Uterus (tissue), 4 donors: ENCODE measurements at regions of chr6 and their contacts with region 1.

Region 1: DNA sequence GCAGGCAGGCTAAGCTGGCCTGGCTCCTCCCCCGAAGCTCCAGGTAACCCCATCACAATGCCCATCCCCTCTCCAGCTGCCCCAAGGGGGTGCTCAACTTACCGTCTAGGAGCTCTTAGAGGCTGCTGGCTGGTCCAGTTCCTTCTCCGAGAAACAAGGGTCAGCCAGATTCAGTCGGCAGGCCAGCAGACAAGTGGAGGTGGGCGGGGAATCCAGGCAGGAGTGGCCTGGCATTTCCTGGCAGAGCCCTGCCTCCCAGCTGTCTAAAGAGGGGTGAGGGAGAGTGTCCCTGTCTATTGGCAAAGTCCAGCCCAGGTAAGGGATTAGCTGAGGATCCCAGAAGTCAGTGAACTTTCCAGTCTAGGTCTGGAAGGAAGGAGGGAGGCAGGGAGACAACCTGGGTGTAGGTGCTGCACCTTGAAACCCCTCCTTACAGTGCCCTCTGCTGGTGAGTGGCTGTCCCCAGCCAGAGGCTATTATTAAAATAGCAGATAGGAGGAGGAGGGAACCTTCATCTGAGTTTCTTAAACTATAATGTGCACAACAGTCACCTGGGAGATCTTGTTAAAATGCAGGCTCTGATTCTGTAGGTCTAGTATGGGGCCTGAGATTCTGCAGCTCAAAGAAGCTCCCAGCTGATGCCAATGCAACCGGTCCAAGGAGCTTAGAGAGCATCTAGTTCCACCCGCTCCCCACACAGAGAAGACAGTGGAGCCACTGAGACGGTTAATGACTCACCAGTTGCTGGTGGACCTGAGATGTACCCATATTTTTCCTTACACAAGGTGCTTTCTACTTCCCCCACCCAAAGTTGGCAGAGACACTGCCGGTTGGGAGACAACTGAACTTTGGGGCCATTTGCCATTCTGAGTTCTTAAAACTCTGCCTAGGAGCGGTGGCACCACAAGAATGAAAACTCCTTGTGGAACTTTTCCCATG is at the start of gene UNC5CL:
- DNase-seq: no peak
- H3K4me3 ChIP-seq: no peak within 1 kb of the TSS
- H3K27ac ChIP-seq: no peak within 1 kb of the TSS
- H3K4me1 ChIP-seq: no peaks in the 10 kb centered on the region
- H3K27me3 ChIP-seq: no peaks in the 10 kb centered on the region
- CTCF ChIP-seq: peak in 2 of 4 experiments; percentile 19 to 29
- POLR2A ChIP-seq: no peak
- total RNA-seq, gene UNC5CL: 0.26 to 1.4 (median 1.2) TPM in 3 of 4 donors, not detected in the other

Region 2: GRCh38 chr6:40894962-40895799 is 144.1 kb before region 1 on chr6:
- intact Hi-C with region 1: loop called (anchors 10 kb)
- DNase-seq: peak; percentile 21 to 43
- H3K4me3 ChIP-seq: no peak overlapping the region
- H3K27ac ChIP-seq: no peak overlapping the region
- H3K4me1 ChIP-seq: no peaks in the 10 kb centered on the region
- H3K27me3 ChIP-seq: no peaks in the 10 kb centered on the region
- CTCF ChIP-seq: peak; percentile 21 to 46 (median 40)
- POLR2A ChIP-seq: no peak

Region 3: DNA sequence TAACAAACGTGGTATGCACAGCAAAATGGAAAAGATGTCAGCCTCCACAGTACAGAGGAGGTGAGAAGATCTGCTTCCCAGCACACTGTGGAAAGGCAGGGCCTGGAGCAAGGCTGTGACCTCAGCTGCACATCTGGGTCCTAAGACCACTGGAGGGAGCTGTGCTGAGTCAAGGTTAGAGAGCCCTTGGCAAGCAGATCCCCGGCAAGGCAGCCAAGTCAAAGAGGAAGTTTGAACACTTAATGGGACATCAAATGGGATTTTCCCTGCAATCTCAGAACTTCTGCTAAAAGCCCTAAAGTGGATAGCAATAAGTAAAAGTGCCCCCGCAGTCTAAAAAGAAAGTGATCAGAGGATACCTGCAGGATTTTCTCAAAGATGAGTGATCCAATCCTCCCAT is 39.8 kb before region 1 on chr6:
- intact Hi-C with region 1: no loop called
- DNase-seq: peak; percentile 42 to 67
- H3K4me3 ChIP-seq: no peak overlapping the region
- H3K27ac ChIP-seq: no peak overlapping the region
- H3K4me1 ChIP-seq: peaks cover 0 to 6% of the 10 kb centered on the region in 2 donors
- H3K27me3 ChIP-seq: no peaks in the 10 kb centered on the region
- CTCF ChIP-seq: peak in 2 of 4 experiments; percentile 10 to 26
- POLR2A ChIP-seq: no peak

Region 4: GRCh38 chr6:41334482-41335040 is 295.2 kb after region 1 on chr6:
- intact Hi-C with region 1: no loop called
- DNase-seq: no peak
- H3K4me3 ChIP-seq: no peak overlapping the region
- H3K27ac ChIP-seq: no peak overlapping the region
- H3K4me1 ChIP-seq: no peaks in the 10 kb centered on the region
- H3K27me3 ChIP-seq: no peaks in the 10 kb centered on the region
- CTCF ChIP-seq: no peak
- POLR2A ChIP-seq: no peak